SK-N-SH (cell line): ENCODE measurements at regions of chr14 and their contacts with region 1.

Region 1: GRCh38 chr14:102694530-102695166 is 82.6 kb upstream of the TRAF3 start:
- DNase-seq: peak; percentile 73
- H3K4me3 ChIP-seq: no peak overlapping the region
- H3K27ac ChIP-seq: no peak overlapping the region
- H3K4me1 ChIP-seq: peaks cover 0 to 31% of the 10 kb centered on the region in 2 experiments; a peak in 3 of 4 replicates
- H3K27me3 ChIP-seq: no peaks in the 10 kb centered on the region
- CTCF ChIP-seq: peak; percentile 79
- EP300 ChIP-seq: no peak
- RAD21 ChIP-seq: peak; percentile 85

Region 2: GRCh38 chr14:102262929-102263462 is 431.7 kb before region 1 on chr14:
- CTCF ChIA-PET with region 1: no interaction called
- POLR2A ChIA-PET with region 1: no interaction called
- DNase-seq: peak; percentile 79
- H3K4me3 ChIP-seq: no peak overlapping the region
- H3K27ac ChIP-seq: peak overlapping the region; percentile 70 to 80
- H3K4me1 ChIP-seq: peaks cover 10 to 17% of the 10 kb centered on the region in 2 experiments; a peak in 3 of 4 replicates
- H3K27me3 ChIP-seq: no peaks in the 10 kb centered on the region
- CTCF ChIP-seq: no peak
- EP300 ChIP-seq: peak; percentile 23 to 27; a peak in 1 of 4 replicates
- RAD21 ChIP-seq: no peak

Region 3: DNA sequence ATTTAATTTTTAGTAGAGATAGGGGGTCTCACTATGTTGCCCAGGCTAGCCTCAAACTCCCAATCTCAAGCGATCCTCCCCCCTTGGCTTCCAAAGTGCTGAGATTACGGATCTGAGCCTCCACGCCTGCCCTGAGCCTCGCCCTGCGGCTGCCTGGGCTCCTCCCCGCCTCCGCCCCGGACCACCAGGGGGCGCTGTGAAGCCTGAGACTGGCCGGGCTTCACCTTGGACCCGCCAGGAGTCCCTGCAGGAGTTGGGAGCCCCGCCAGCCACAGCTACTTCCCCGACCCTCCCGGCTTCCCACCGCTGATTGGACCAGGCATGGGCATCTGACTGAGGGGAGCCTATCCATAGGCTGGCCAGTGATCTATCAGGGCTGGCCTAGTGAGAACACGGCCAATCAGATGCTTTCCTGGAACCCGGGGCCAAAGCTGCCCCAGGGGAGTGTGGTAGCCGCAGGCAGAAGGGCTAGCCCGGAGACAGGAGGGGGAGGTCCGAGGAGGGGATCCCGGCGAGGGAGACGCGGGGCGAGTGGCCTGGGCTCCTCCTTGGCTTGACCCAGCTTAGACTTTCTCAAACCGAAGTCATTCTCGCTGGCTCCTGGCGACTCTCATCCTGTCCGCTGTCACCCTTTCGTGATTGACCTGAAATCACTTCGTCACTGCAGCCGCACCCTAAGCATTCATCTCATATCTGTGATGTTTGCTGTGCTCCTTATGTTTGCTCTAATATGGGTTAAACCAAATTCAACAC is 170.0 kb before region 1 on chr14:
- CTCF ChIA-PET with region 1: interaction called, 15 read pairs
- POLR2A ChIA-PET with region 1: no interaction called
- DNase-seq: peak; percentile 99
- H3K4me3 ChIP-seq: peak overlapping the region; percentile 59 to 69
- H3K27ac ChIP-seq: peak overlapping the region; percentile 63 to 80
- H3K4me1 ChIP-seq: peaks cover 0 to 12% of the 10 kb centered on the region in 2 experiments; a peak in 2 of 4 replicates
- H3K27me3 ChIP-seq: no peaks in the 10 kb centered on the region
- CTCF ChIP-seq: peak; percentile 97
- EP300 ChIP-seq: peak in 1 of 2 experiments; percentile 51; a peak in 2 of 4 replicates
- RAD21 ChIP-seq: peak; percentile 77

Region 4: DNA sequence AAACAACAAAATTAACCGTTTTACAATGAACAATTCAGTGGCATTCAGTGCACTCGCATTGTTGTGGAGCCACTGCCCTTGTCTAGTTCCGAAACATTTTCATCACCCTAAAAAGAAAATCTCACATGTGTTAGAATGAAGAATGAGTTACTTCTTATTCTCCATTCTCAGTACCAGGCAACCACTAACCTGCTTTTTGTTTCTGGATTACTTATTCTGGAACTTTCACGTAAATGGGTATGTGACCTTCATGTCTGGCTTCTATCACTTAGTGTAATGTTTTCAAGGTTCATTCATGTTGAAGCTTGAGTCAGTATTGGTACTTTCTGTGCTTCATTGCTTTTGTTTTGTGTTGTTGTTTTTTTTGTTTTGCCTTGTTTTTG is 86.6 kb before region 1 on chr14:
- CTCF ChIA-PET with region 1: no interaction called
- POLR2A ChIA-PET with region 1: no interaction called
- DNase-seq: no peak
- H3K4me3 ChIP-seq: no peak overlapping the region
- H3K27ac ChIP-seq: no peak overlapping the region
- H3K4me1 ChIP-seq: no peaks in the 10 kb centered on the region
- H3K27me3 ChIP-seq: no peaks in the 10 kb centered on the region
- CTCF ChIP-seq: no peak
- EP300 ChIP-seq: no peak
- RAD21 ChIP-seq: no peak

Region 5: DNA sequence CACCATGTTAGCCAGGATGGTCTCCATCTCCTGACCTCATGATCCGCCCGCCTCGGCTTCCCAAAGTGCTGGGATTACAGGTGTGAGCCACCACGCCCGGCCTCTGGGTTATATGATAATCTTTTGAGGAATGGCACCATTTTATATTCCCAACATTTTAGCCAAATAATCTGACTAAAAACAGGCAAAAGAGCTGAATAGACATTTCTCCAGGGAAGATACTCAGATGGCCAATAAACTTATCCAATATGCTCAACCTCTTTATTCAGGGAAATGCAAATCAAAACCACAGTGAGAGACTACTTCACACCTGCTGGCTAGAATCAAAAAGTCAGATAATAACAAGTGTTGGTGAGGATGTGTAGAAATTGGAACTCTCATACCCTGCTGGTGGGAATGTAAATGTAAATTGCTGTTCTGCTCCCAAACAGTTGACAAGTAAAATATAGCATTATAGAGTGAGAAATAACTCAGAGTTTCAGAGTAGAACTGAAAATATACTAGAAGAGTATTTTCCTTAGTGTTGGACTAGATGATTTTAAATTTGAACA is 22.2 kb before region 1 on chr14:
- CTCF ChIA-PET with region 1: interaction called, 17 read pairs
- POLR2A ChIA-PET with region 1: no interaction called
- DNase-seq: no peak
- H3K4me3 ChIP-seq: no peak overlapping the region
- H3K27ac ChIP-seq: no peak overlapping the region
- H3K4me1 ChIP-seq: no peaks in the 10 kb centered on the region; a peak in 1 of 4 replicates
- H3K27me3 ChIP-seq: no peaks in the 10 kb centered on the region
- CTCF ChIP-seq: 0 out of 2 replicates have a peak, but pooled peaks have one; percentile 14
- EP300 ChIP-seq: no peak
- RAD21 ChIP-seq: no peak

Region 6: DNA sequence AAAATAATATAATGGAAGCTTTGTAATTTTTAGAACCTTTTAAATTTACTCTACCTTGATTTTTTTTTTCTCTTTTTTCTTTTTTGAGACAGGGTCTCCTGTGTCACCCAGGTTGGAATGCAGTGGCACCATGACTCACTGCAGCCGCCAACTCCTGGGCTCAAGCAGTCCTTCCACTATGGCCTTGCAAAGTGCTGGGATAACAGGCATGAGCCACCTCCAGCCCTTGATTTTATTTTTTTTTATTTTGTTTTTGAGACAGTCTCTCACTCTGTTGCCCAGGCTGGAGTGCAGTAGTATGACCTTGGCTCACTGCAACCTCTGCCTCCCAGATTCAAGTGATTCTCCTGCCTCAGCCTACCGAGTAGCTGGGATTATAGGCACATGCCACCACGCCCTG is 17.3 kb after region 1 on chr14:
- CTCF ChIA-PET with region 1: interaction called, 17 read pairs
- POLR2A ChIA-PET with region 1: no interaction called
- DNase-seq: no peak
- H3K4me3 ChIP-seq: no peak overlapping the region
- H3K27ac ChIP-seq: no peak overlapping the region
- H3K4me1 ChIP-seq: no peaks in the 10 kb centered on the region; a peak in 1 of 4 replicates
- H3K27me3 ChIP-seq: no peaks in the 10 kb centered on the region
- CTCF ChIP-seq: no peak
- EP300 ChIP-seq: no peak
- RAD21 ChIP-seq: no peak

Region 7: GRCh38 chr14:102774391-102775153 is 79.9 kb after region 1 on chr14:
- CTCF ChIA-PET with region 1: interaction called, 66 read pairs
- POLR2A ChIA-PET with region 1: no interaction called
- DNase-seq: peak; percentile 80
- H3K4me3 ChIP-seq: peak overlapping the region in 1 of 2 experiments; percentile 31; a peak in 1 of 4 replicates
- H3K27ac ChIP-seq: no peak overlapping the region
- H3K4me1 ChIP-seq: peaks cover 9 to 12% of the 10 kb centered on the region in 2 experiments; a peak in 3 of 4 replicates
- H3K27me3 ChIP-seq: no peaks in the 10 kb centered on the region
- CTCF ChIP-seq: peak; percentile 73
- EP300 ChIP-seq: no peak
- RAD21 ChIP-seq: peak; percentile 78

Region 8: GRCh38 chr14:102795060-102795925 is 100.6 kb after region 1 on chr14:
- CTCF ChIA-PET with region 1: no interaction called
- POLR2A ChIA-PET with region 1: no interaction called
- DNase-seq: no peak
- H3K4me3 ChIP-seq: no peak overlapping the region
- H3K27ac ChIP-seq: peak overlapping the region in 1 of 2 experiments; percentile 80; a peak in 2 of 4 replicates
- H3K4me1 ChIP-seq: peaks cover 3 to 8% of the 10 kb centered on the region in 2 experiments; a peak in 2 of 4 replicates
- H3K27me3 ChIP-seq: no peaks in the 10 kb centered on the region
- CTCF ChIP-seq: peak; percentile 58
- EP300 ChIP-seq: no peak
- RAD21 ChIP-seq: no peak